ENCODE measurements at regions of chr16 and their contacts with region 1.

Region 1: DNA sequence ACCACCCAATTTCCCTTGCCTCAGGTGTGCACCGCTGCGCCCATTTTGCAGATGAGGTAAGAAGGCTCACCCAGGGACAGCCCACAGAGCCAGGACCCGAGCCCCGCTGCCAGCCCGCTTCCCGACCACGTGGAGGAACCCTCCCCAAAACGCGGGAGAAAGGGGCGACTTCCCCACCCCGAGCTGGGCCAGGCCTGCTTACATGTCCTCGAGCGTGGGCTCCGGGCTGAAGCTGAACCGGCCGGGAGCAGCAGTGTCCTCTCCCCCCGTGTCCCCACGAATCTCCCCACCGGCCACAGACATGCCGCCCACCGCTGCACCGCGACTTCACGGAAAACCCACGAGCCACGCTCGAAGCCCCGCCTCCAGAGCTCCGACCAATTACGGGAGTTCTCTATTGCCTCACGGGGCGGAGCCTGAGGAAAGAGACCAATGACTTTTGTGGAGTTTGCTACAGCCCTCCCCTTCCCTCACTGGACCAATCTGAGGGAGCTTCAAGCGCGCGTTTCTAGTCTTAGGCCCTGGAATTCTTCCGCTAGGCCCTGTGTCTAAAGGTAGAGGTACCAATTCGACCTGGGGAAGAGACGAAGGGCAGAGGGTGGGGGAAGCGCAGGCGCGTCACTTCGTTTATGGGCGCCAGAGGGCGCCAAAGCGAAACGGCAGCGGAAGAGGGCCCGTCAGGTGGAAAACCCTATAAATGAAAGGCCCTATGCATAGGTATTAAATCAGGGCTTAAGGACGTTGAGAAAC is at the start of gene DCTPP1:
- DNase-seq: peak; percentile 79 to 99 (median 97)
- ATAC-seq: peak; percentile 98
- H3K4me3 ChIP-seq: peak within 1 kb of the TSS; percentile 67
- H3K4me3 Mint-ChIP-seq: no peak within 1 kb of the TSS
- H3K27ac ChIP-seq: peak within 1 kb of the TSS; percentile 85
- H3K27ac Mint-ChIP-seq: peak within 1 kb of the TSS in 1 of 9 donors; percentile 38
- H3K4me1 ChIP-seq: peaks cover 16 to 19% of the 10 kb centered on the region in 2 donors
- H3K4me1 Mint-ChIP-seq: peaks cover 14 to 29% (median 21%) of the 10 kb centered on the region in 7 donors
- H3K27me3 ChIP-seq: no peaks in the 10 kb centered on the region
- H3K27me3 Mint-ChIP-seq: no peaks in the 10 kb centered on the region
- total RNA-seq, gene DCTPP1: 11.6 to 74.1 (median 13.8) TPM

Region 2: DNA sequence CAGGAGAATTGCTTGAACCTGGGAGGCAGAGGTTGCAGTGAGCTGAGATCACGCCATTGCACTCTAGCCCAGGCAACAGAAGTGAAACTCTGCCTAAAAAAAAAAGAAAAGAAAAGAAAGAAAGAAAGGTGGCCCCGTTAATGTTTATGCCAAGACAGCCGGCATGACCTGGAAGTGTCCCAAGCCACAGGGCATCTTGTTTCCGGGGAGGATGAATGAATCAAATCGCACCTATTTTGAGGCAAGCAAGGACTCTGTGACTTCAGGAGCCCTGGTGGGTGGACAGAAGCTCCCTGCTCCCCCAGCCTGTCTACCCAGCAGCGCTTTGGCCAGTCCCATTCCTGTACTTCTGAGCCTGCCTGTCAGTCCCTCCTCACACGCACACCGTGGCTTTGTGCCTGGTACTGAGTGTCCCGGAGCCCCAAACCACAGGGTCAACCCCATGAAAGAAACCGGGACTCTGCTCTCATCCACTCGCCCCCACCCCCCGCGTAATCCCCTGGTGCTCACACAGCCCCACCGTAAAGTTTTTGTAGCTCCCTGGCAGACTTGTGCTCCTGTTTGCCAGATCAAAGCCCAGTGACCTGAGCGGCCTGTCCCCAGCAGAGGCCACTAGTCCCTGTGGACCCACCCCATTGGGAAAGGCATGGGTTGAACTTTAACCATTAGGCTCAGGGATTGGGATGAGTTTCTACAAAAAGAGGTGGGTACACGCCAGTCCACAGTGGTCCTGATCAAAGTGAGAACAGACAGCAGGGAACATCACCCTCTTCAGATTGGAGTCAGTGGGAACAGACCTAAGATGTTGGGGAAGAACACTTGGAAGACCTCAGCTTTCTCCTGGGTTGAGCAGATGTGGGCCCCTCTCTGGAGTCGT is 94.0 kb before region 1 on chr16:
- CTCF ChIA-PET with region 1: no interaction called
- POLR2A ChIA-PET with region 1: no interaction called
- intact Hi-C with region 1: no loop called
- DNase-seq: peak in 1 of 9 donors; percentile 26
- ATAC-seq: no peak
- H3K4me3 ChIP-seq: peak overlapping the region; percentile 50
- H3K4me3 Mint-ChIP-seq: peak overlapping the region; percentile 80 to 96 (median 87)
- H3K27ac ChIP-seq: peak overlapping the region; percentile 74
- H3K27ac Mint-ChIP-seq: peak overlapping the region; percentile 57 to 91 (median 81)
- H3K4me1 ChIP-seq: peaks cover 7% of the 10 kb centered on the region in 2 donors
- H3K4me1 Mint-ChIP-seq: peaks cover 3 to 30% (median 17%) of the 10 kb centered on the region in 7 donors
- H3K27me3 ChIP-seq: no peaks in the 10 kb centered on the region
- H3K27me3 Mint-ChIP-seq: no peaks in the 10 kb centered on the region

Region 3: GRCh38 chr16:30458561-30459394 is 28.9 kb after region 1 on chr16:
- CTCF ChIA-PET with region 1: interaction called, 5 read pairs
- POLR2A ChIA-PET with region 1: interaction called, 14 read pairs
- intact Hi-C with region 1: loop called in 1 of 2 experiments (anchors 1 kb)
- DNase-seq: peak; percentile 41 to 90 (median 58)
- ATAC-seq: peak; percentile 96
- H3K4me3 ChIP-seq: peak overlapping the region; percentile 31
- H3K4me3 Mint-ChIP-seq: peak overlapping the region; percentile 57 to 81 (median 72)
- H3K27ac ChIP-seq: peak overlapping the region; percentile 57
- H3K27ac Mint-ChIP-seq: peak overlapping the region; percentile 64 to 96 (median 86)
- H3K4me1 ChIP-seq: peaks cover 25% of the 10 kb centered on the region in 2 donors
- H3K4me1 Mint-ChIP-seq: peaks cover 34 to 71% (median 47%) of the 10 kb centered on the region in 7 donors
- H3K27me3 ChIP-seq: no peaks in the 10 kb centered on the region
- H3K27me3 Mint-ChIP-seq: peaks cover 0 to 2% (median 0%) of the 10 kb centered on the region in 5 donors

Region 4: DNA sequence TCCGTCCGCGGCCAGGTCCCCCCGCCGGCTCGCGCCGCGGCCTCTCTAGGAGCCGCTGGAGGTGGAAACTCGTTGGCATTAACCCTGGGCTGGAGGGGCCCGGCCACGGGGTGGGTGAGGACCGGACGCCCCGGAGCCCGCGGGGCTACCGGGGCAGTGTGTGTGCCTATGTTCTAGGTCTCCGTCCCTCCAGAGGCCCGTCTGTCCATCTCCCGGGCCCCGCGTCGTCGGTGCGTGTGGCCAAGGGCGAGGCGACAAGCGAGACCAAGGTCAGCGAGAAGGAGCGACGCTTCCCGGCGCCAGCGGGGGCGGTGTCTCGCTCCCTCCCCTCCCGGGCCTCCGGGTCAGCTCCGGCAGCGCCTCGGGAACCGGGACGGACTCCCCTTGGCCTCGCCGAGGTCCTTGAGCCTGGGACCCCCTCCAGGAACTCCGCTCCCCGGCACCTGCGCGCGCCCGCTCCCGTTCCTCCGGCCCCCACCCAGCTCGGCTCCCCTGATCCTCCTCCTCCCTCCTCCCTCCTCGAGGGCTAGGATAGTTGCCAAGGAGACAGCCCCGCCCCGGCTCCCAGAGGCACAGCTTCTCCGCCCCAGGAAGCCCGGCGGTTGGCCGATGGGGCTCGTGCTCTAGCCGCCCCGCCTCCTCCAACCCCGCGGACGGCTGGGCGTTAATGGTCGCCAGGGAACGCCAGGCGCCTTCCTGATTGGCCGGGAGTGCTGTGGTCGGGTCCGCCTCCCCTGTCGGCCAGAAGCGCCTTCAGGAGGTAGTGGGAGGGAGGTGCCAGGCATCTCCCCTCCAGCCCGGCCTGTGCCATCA is 97.2 kb after region 1 on chr16:
- CTCF ChIA-PET with region 1: interaction called, 3 read pairs
- POLR2A ChIA-PET with region 1: interaction called, 4 read pairs
- intact Hi-C with region 1: loop called (anchors 1 kb)
- DNase-seq: peak; percentile 59 to 95 (median 64)
- ATAC-seq: peak; percentile 87
- H3K4me3 ChIP-seq: peak overlapping the region; percentile 75
- H3K4me3 Mint-ChIP-seq: peak overlapping the region; percentile 78 to 92 (median 88)
- H3K27ac ChIP-seq: peak overlapping the region; percentile 76
- H3K27ac Mint-ChIP-seq: peak overlapping the region; percentile 82 to 94 (median 88)
- H3K4me1 ChIP-seq: peaks cover 0 to 10% of the 10 kb centered on the region in 2 donors
- H3K4me1 Mint-ChIP-seq: peaks cover 16 to 39% (median 32%) of the 10 kb centered on the region in 7 donors
- H3K27me3 ChIP-seq: no peaks in the 10 kb centered on the region
- H3K27me3 Mint-ChIP-seq: no peaks in the 10 kb centered on the region

Region 5: GRCh38 chr16:30571695-30572600 is 142.1 kb after region 1 on chr16 and contains the start of gene ZNF688:
- CTCF ChIA-PET with region 1: interaction called, 5 read pairs
- POLR2A ChIA-PET with region 1: interaction called, 17 read pairs
- intact Hi-C with region 1: loop called (anchors 1 kb)
- DNase-seq: peak; percentile 74 to 99 (median 97)
- ATAC-seq: peak; percentile 89
- H3K4me3 ChIP-seq: peak within 1 kb of the TSS; percentile 88
- H3K4me3 Mint-ChIP-seq: peak within 1 kb of the TSS; percentile 87 to 98 (median 90)
- H3K27ac ChIP-seq: peak within 1 kb of the TSS; percentile 94
- H3K27ac Mint-ChIP-seq: peak within 1 kb of the TSS; percentile 92 to 98 (median 95)
- H3K4me1 ChIP-seq: peaks cover 36 to 38% of the 10 kb centered on the region in 2 donors
- H3K4me1 Mint-ChIP-seq: peaks cover 17 to 51% (median 39%) of the 10 kb centered on the region in 7 donors
- H3K27me3 ChIP-seq: no peaks in the 10 kb centered on the region
- H3K27me3 Mint-ChIP-seq: no peaks in the 10 kb centered on the region
- total RNA-seq, gene ZNF688: 8.8 to 24.3 (median 16.3) TPM

Region 6: GRCh38 chr16:30609926-30610839 is 180.3 kb after region 1 on chr16 and contains the start of gene ZNF689:
- CTCF ChIA-PET with region 1: interaction called, 3 read pairs
- POLR2A ChIA-PET with region 1: no interaction called
- intact Hi-C with region 1: loop called in 1 of 2 experiments (anchors 1 kb)
- DNase-seq: peak; percentile 90 to 98 (median 93)
- ATAC-seq: peak; percentile 96
- H3K4me3 ChIP-seq: peak within 1 kb of the TSS; percentile 98
- H3K4me3 Mint-ChIP-seq: peak within 1 kb of the TSS; percentile 89 to 97 (median 94)
- H3K27ac ChIP-seq: peak within 1 kb of the TSS; percentile 94
- H3K27ac Mint-ChIP-seq: peak within 1 kb of the TSS; percentile 94 to 99 (median 97)
- H3K4me1 ChIP-seq: peaks cover 8 to 11% of the 10 kb centered on the region in 2 donors
- H3K4me1 Mint-ChIP-seq: peaks cover 5 to 26% (median 22%) of the 10 kb centered on the region in 7 donors
- H3K27me3 ChIP-seq: no peaks in the 10 kb centered on the region
- H3K27me3 Mint-ChIP-seq: no peaks in the 10 kb centered on the region
- total RNA-seq, gene ZNF689: 6.8 to 14.6 (median 12.4) TPM

Region 7: GRCh38 chr16:30692381-30693064 is 262.7 kb after region 1 on chr16:
- CTCF ChIA-PET with region 1: interaction called, 4 read pairs
- POLR2A ChIA-PET with region 1: no interaction called
- intact Hi-C with region 1: loop called in 1 of 2 experiments (anchors 1 kb)
- DNase-seq: no peak
- ATAC-seq: no peak
- H3K4me3 ChIP-seq: no peak overlapping the region
- H3K4me3 Mint-ChIP-seq: no peak overlapping the region
- H3K27ac ChIP-seq: no peak overlapping the region
- H3K27ac Mint-ChIP-seq: peak overlapping the region in 2 of 9 donors; percentile 2 to 20
- H3K4me1 ChIP-seq: peaks cover 3 to 16% of the 10 kb centered on the region in 2 donors
- H3K4me1 Mint-ChIP-seq: peaks cover 15 to 27% (median 21%) of the 10 kb centered on the region in 7 donors
- H3K27me3 ChIP-seq: no peaks in the 10 kb centered on the region
- H3K27me3 Mint-ChIP-seq: no peaks in the 10 kb centered on the region

Measured in naive thymus-derived CD4-positive, alpha-beta T cell (primary cell).